ENCODE measurements at regions of chr5 and their contacts with region 1.

Region 1: GRCh38 chr5:59367791-59368394 is 525.6 kb downstream of the PDE4D start:
- DNase-seq: peak; percentile 58
- H3K4me3 Mint-ChIP-seq: no peak overlapping the region
- H3K27ac Mint-ChIP-seq: no peak overlapping the region
- H3K4me1 Mint-ChIP-seq: peaks cover 11% of the 10 kb centered on the region
- H3K27me3 Mint-ChIP-seq: peaks cover 14% of the 10 kb centered on the region

Region 2: DNA sequence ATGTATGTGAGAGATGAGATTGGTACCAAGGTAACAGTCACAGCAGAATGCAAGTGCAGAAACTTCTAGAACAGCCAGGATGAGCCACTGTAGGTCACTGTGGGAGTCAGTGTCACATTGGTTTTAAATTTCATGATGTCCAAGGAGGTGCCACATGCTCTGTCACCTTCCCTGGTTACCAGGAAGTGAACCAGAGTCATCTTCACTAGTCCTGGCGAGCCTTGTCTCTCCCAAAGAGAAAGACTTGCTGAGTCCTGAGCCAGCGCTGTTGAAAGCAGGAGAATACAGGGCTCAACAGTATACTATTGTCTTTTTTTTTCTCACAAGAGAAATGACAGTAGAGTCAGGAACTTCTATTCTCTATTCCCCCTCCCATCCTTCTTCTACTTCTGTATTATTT is 169.5 kb before region 1 on chr5:
- CTCF ChIA-PET with region 1: interaction called, 16 read pairs
- POLR2A ChIA-PET with region 1: no interaction called
- intact Hi-C with region 1: no loop called
- DNase-seq: no peak
- H3K4me3 Mint-ChIP-seq: no peak overlapping the region
- H3K27ac Mint-ChIP-seq: no peak overlapping the region
- H3K4me1 Mint-ChIP-seq: peaks cover 4% of the 10 kb centered on the region
- H3K27me3 Mint-ChIP-seq: no peaks in the 10 kb centered on the region

Region 3: DNA sequence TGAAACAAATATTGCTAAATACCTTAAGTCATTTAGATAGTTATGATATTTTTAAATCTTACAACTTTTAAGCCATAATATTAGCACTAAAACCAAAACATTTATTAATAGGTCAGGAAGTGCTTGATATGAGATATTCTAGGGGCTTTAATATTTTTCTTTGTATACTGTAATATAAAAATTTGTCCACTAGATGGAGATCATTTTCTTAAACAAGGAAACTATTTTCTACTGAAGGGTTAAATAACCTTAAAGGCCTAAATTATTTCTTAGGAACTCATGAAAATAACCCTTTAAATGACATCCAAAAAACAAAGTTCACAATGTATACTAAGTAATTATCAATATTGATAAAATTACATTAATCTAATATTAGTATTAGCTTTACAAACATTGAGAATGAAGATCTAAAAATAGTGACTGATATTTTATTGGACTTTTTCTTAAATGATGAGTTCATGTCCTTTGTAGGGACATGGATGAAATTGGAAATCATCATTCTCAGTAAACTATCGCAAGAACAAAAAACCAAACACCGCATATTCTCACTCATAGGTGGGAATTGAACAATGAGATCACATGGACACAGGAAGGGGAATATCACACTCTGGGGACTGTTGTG is 149.4 kb before region 1 on chr5:
- CTCF ChIA-PET with region 1: interaction called, 9 read pairs
- POLR2A ChIA-PET with region 1: no interaction called
- intact Hi-C with region 1: loop called (anchors 1 kb)
- DNase-seq: no peak
- H3K4me3 Mint-ChIP-seq: no peak overlapping the region
- H3K27ac Mint-ChIP-seq: no peak overlapping the region
- H3K4me1 Mint-ChIP-seq: no peaks in the 10 kb centered on the region
- H3K27me3 Mint-ChIP-seq: peaks cover 26% of the 10 kb centered on the region

Region 4: GRCh38 chr5:59238126-59238902 is 129.6 kb before region 1 on chr5:
- CTCF ChIA-PET with region 1: interaction called, 3 read pairs
- POLR2A ChIA-PET with region 1: no interaction called
- intact Hi-C with region 1: loop called (anchors 1 kb)
- DNase-seq: peak; percentile 9
- H3K4me3 Mint-ChIP-seq: peak overlapping the region; percentile 7
- H3K27ac Mint-ChIP-seq: peak overlapping the region; percentile 18
- H3K4me1 Mint-ChIP-seq: peaks cover 19% of the 10 kb centered on the region
- H3K27me3 Mint-ChIP-seq: peaks cover 51% of the 10 kb centered on the region

Region 5: GRCh38 chr5:59275510-59276324 is 92.2 kb before region 1 on chr5:
- CTCF ChIA-PET with region 1: no interaction called
- POLR2A ChIA-PET with region 1: no interaction called
- intact Hi-C with region 1: no loop called
- DNase-seq: no peak
- H3K4me3 Mint-ChIP-seq: peak overlapping the region; percentile 6
- H3K27ac Mint-ChIP-seq: no peak overlapping the region
- H3K4me1 Mint-ChIP-seq: peaks cover 8% of the 10 kb centered on the region
- H3K27me3 Mint-ChIP-seq: peaks cover 18% of the 10 kb centered on the region

Region 6: GRCh38 chr5:59293697-59294096 is 74.2 kb before region 1 on chr5:
- CTCF ChIA-PET with region 1: no interaction called
- POLR2A ChIA-PET with region 1: no interaction called
- intact Hi-C with region 1: no loop called
- DNase-seq: peak; percentile 15
- H3K4me3 Mint-ChIP-seq: no peak overlapping the region
- H3K27ac Mint-ChIP-seq: no peak overlapping the region
- H3K4me1 Mint-ChIP-seq: peaks cover 17% of the 10 kb centered on the region
- H3K27me3 Mint-ChIP-seq: no peaks in the 10 kb centered on the region

Region 7: GRCh38 chr5:59356813-59357380 is 11.0 kb before region 1 on chr5:
- CTCF ChIA-PET with region 1: interaction called, 23 read pairs
- POLR2A ChIA-PET with region 1: no interaction called
- intact Hi-C with region 1: no loop called
- DNase-seq: no peak
- H3K4me3 Mint-ChIP-seq: no peak overlapping the region
- H3K27ac Mint-ChIP-seq: no peak overlapping the region
- H3K4me1 Mint-ChIP-seq: no peaks in the 10 kb centered on the region
- H3K27me3 Mint-ChIP-seq: peaks cover 12% of the 10 kb centered on the region

Region 8: DNA sequence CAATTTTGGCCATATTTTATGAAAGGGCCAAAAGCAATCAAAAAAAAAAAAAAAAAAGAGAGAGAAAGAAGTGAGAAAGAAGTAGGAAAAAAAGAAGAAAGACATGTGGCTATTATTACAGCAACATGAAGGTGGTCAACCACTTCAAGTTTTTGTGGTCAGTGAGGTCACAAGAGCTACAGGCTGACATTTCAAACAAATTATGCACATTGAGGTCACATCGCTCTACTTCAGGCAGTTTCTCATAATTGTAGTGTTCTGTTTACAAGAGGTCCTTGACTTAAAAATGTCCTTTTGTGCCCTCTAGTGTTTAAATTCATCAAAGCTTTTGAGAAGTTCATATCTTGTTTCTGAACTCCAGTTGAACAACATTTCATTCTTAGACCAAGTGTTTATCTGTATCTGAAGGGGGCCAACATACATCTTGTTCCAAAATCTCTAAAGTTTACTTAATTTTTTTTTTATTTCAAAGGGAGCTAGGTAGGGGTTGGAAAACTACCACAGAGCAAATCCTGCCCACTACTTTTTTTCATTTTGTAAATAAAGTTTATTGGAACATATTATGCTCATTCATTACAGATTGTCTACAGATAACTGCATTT is 12.6 kb after region 1 on chr5:
- CTCF ChIA-PET with region 1: interaction called, 22 read pairs
- POLR2A ChIA-PET with region 1: no interaction called
- intact Hi-C with region 1: no loop called
- DNase-seq: peak; percentile 24
- H3K4me3 Mint-ChIP-seq: no peak overlapping the region
- H3K27ac Mint-ChIP-seq: no peak overlapping the region
- H3K4me1 Mint-ChIP-seq: no peaks in the 10 kb centered on the region
- H3K27me3 Mint-ChIP-seq: no peaks in the 10 kb centered on the region